AG04450 (cell line): ENCODE measurements at regions of chr22 and their contacts with region 1.

Region 1: DNA sequence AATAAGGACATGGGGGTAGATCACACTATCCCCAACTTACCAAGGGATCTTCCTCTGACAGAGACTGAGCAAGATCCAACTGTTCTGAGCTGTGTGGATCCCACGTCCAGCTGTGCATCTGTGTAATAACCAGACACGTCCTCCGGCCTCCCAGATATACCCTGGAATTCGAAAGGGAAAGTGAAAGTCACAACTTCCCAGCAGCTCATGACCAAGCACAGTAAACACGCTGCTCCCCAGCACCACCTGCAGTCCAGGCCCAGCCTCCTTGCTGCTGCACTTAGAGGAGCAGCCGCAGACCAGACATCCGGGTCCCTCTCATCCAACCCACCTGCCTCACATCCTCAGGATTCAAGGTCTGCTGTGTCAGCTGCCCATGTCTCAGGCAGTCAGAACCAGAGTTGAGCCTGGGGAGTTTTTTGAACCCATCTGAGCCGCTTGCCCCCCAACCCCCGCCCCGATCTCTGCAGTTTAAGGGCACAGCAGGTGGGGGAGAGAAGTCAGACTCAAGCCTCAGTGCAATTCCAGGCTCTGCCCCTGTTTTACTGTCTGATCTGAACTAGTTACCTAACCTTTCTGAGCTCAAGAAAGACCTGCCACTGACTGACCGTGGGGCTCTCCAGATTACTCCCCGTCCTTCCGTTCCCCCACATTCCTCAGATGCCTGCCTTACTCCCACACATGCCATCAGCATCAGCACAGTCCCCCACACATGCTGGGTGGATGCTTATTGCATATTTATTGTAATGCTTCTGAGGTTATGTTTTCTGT is at the start of gene APOL2:
- DNase-seq: peak; percentile 83
- H3K4me3 ChIP-seq: peak within 1 kb of the TSS; percentile 75
- H3K27ac ChIP-seq: peak within 1 kb of the TSS; percentile 83
- H3K27me3 ChIP-seq: no peaks in the 10 kb centered on the region
- CTCF ChIP-seq: peak; percentile 77
- polyA plus RNA-seq, gene APOL2: 18.8 and 19.7 TPM in 2 replicates

Region 2: GRCh38 chr22:36221799-36222751 is 17.5 kb before region 1 on chr22:
- CTCF ChIA-PET with region 1: interaction called, 13 read pairs
- POLR2A ChIA-PET with region 1: interaction called, 3 read pairs
- DNase-seq: no peak
- H3K4me3 ChIP-seq: no peak overlapping the region
- H3K27ac ChIP-seq: no peak overlapping the region
- H3K27me3 ChIP-seq: peaks cover 24% of the 10 kb centered on the region
- CTCF ChIP-seq: peak; percentile 68